Heart left ventricle (tissue), 16 donors: ENCODE measurements at regions of chr3 and their contacts with region 1.

Region 1: DNA sequence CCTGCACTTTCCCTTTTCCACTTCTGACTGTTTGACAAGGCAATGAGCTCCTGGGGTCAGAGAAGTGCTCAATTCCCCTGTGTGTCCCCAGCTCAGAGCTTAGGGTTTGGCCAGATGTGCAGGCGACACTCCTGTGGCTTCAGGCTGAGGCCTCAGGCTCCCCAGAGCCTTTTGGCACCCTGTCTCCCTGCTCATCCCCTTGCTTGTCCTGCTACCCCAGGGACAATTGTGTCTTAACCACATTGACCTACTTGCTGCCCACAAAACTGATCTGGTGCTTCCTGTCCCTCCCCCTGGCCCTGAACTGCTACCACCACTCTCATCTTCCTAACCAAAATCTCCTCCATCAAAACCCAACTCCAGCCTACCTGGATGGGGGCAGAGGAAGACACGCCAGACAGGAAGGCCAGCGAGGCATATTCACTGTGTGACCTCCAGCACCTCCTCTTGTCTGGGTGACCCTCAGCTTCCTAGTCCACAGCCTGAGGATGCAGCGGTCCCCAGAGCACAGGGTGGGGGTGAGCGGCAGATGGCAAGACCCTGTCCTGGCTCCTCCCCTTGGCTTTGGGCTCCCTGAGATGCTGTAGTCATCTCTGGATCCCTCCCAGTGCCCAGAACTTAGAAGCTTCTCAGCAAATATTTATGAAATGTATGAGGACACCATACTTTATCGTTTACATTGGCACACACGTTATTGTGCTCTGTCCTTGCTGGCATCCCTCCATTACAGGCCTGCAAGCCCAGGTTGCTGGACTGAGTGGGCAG is 98.9 kb upstream of the SLC6A6 start:
- DNase-seq: no peak
- ATAC-seq: no peak
- H3K4me3 ChIP-seq: no peak overlapping the region
- H3K27ac ChIP-seq: peak overlapping the region in 2 of 12 donors; percentile 45 to 75
- H3K4me1 ChIP-seq: peaks cover 0 to 17% (median 8%) of the 10 kb centered on the region in 12 donors
- H3K27me3 ChIP-seq: peaks cover 0 to 12% (median 0%) of the 10 kb centered on the region in 9 donors
- CTCF ChIP-seq: no peak
- POLR2A ChIP-seq: no peak

Region 2: DNA sequence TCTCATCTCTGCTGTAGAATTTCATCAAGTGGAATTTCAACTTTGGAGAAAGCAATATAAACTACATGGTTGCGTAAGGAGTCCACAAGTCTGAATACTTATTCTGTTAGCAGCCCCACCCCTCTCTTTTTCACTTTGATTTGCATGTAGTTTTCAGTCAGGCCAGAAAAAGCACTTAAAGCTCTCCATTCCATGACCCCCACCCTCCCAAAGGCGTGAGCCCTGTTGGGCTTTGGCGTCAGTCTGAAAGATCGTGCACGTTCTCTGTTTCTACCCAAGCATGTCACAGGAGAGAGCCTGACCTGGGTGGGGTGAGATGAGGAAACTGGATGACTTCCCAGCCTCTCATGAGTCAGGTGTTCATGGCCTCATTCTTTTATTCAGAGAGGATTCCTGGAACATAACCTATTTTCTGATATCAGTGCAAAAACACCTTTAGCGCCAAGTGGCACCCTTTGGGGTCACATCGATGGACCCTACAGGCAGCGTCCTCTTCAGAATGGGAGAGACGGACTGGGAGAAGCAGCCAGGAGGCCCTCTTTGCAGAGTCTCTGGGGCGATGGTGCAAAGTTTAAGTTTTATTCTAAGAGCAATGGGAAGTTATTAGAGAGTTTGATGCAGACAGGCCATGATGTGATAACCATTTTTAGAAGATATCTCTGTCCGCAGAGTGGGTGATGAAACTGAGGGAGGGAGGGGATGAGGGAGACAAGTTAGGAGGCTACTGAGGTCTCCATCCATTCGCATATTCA is 69.1 kb before region 1 on chr3:
- intact Hi-C with region 1: loop called in 1 of 10 experiments (anchors 2 kb)
- DNase-seq: peak in 4 of 5 donors; percentile 33 to 61 (median 53)
- ATAC-seq: peak; percentile 17 to 65 (median 57)
- H3K4me3 ChIP-seq: no peak overlapping the region
- H3K27ac ChIP-seq: peak overlapping the region in 10 of 12 donors; percentile 39 to 95 (median 80)
- H3K4me1 ChIP-seq: peaks cover 0 to 57% (median 29%) of the 10 kb centered on the region in 12 donors
- H3K27me3 ChIP-seq: peaks cover 0 to 5% (median 0%) of the 10 kb centered on the region in 9 donors
- CTCF ChIP-seq: no peak
- POLR2A ChIP-seq: no peak

Region 3: DNA sequence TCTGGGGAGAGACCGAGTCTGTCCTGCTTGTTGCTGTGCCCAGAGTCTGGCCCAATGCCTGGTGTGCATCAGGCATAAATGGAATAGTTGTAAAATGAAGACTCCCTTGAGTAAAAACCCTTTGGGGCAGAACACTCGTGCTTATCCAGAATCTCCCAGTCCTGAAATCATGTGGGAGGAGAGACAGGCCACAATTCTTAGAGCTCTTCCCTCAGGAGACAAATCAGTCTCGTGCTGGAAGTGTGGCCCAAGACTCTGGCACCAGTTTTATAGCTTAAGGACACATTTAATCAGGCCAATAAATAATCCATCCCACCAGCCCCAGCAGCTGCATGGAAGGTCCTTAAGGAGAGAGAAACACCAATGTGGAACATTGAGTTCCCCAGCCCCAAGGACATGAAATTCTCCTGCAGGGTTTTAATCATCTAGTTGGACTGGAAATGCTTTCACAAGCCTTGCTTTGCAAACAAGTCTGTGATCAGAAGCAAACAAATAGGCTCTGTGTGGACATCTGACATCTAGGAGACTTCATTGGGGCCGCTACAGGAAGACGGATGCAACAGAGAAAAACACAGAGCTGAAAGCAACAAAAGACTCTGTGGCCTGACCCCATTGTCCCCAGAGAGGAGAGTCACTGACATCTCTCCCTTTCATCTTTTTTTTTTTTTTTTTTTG is 54.5 kb before region 1 on chr3:
- intact Hi-C with region 1: no loop called
- DNase-seq: no peak
- ATAC-seq: peak in 1 of 4 donors; percentile 35
- H3K4me3 ChIP-seq: no peak overlapping the region
- H3K27ac ChIP-seq: peak overlapping the region in 1 of 12 donors; percentile 33
- H3K4me1 ChIP-seq: peaks cover 0 to 4% (median 0%) of the 10 kb centered on the region in 12 donors
- H3K27me3 ChIP-seq: peaks cover 0 to 17% (median 0%) of the 10 kb centered on the region in 9 donors
- CTCF ChIP-seq: no peak
- POLR2A ChIP-seq: no peak